Ovary (tissue), 10 donors: ENCODE measurements at regions of chr9 and their contacts with region 1.

Region 1: DNA sequence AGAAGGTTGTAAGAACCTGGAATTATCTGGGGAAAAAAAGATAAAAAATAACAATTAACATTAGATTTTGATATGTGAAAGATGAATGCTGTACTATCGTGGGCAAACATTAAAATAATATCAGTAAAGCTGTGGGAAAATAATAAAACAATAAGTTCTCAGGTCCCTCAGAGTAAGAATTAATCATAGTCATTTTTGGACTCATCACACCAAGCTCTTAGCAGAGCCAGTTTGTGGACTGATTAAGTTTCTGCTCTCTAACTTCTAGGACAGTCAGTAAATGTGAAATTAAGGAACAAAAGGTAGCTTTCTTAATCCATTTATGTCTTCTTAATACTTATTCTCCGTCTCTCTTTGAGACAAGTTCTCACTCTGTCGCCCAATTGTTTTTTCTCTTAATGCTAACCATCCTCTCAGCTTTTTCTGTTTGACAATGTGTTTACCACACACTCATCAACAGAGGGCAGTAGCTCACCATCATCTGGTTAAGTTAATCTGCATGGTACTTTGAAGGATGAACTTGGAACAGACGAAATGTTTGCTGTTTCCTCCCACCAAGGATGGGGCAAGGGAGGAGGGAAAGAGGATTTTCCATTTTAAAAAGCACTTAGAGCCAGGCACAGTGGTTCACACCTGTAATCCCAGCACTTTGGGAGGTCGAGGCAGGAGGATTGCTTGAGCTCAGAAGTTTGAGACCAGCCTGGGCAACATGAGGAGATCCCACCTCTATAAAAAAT is 5.3 kb upstream of the ACO1 start:
- DNase-seq: peak in 3 of 5 donors; percentile 35 to 59 (median 41)
- H3K4me3 ChIP-seq: no peak overlapping the region
- H3K27ac ChIP-seq: no peak overlapping the region
- H3K4me1 ChIP-seq: peaks cover 1% of the 10 kb centered on the region
- H3K27me3 ChIP-seq: no peaks in the 10 kb centered on the region
- CTCF ChIP-seq: peak; percentile 53 to 87 (median 82)
- EP300 ChIP-seq: no peak
- POLR2A ChIP-seq: no peak

Region 2: GRCh38 chr9:32571969-32572899 is 193.1 kb after region 1 on chr9:
- intact Hi-C with region 1: loop called in 1 of 4 experiments (anchors 2 kb)
- DNase-seq: peak in 3 of 5 donors; percentile 40 to 57 (median 53)
- H3K4me3 ChIP-seq: peak overlapping the region; percentile 50
- H3K27ac ChIP-seq: peak overlapping the region; percentile 63 to 73
- H3K4me1 ChIP-seq: no peaks in the 10 kb centered on the region
- H3K27me3 ChIP-seq: no peaks in the 10 kb centered on the region
- CTCF ChIP-seq: peak in 2 of 3 donors; percentile 28 to 40
- EP300 ChIP-seq: no peak
- POLR2A ChIP-seq: no peak

Region 3: GRCh38 chr9:32579706-32580331 is 200.7 kb after region 1 on chr9:
- intact Hi-C with region 1: loop called in 3 of 4 experiments (anchors 2 to 5 kb)
- DNase-seq: peak; percentile 48 to 77 (median 76)
- H3K4me3 ChIP-seq: no peak overlapping the region
- H3K27ac ChIP-seq: no peak overlapping the region
- H3K4me1 ChIP-seq: no peaks in the 10 kb centered on the region
- H3K27me3 ChIP-seq: no peaks in the 10 kb centered on the region
- CTCF ChIP-seq: peak; percentile 49 to 76 (median 76)
- EP300 ChIP-seq: no peak
- POLR2A ChIP-seq: no peak